ENCODE measurements at regions of chr10 and their contacts with region 1.

Region 1: GRCh38 chr10:124381011-124381611 is 37.6 kb downstream of the OAT start:
- DNase-seq: no peak
- ATAC-seq: no peak
- H3K4me3 ChIP-seq: no peak overlapping the region
- H3K27ac ChIP-seq: no peak overlapping the region
- H3K4me1 ChIP-seq: no peaks in the 10 kb centered on the region
- H3K27me3 ChIP-seq: peaks cover 0 to 37% (median 10%) of the 10 kb centered on the region in 7 donors
- CTCF ChIP-seq: no peak

Region 2: GRCh38 chr10:124005991-124006392 is 375.1 kb before region 1 on chr10:
- intact Hi-C with region 1: loop called in 1 of 10 experiments (anchors 5 kb)
- DNase-seq: no peak
- ATAC-seq: no peak
- H3K4me3 ChIP-seq: no peak overlapping the region
- H3K27ac ChIP-seq: no peak overlapping the region
- H3K4me1 ChIP-seq: peaks cover 0 to 11% (median 0%) of the 10 kb centered on the region in 9 donors
- H3K27me3 ChIP-seq: no peaks in the 10 kb centered on the region
- CTCF ChIP-seq: no peak

Region 3: DNA sequence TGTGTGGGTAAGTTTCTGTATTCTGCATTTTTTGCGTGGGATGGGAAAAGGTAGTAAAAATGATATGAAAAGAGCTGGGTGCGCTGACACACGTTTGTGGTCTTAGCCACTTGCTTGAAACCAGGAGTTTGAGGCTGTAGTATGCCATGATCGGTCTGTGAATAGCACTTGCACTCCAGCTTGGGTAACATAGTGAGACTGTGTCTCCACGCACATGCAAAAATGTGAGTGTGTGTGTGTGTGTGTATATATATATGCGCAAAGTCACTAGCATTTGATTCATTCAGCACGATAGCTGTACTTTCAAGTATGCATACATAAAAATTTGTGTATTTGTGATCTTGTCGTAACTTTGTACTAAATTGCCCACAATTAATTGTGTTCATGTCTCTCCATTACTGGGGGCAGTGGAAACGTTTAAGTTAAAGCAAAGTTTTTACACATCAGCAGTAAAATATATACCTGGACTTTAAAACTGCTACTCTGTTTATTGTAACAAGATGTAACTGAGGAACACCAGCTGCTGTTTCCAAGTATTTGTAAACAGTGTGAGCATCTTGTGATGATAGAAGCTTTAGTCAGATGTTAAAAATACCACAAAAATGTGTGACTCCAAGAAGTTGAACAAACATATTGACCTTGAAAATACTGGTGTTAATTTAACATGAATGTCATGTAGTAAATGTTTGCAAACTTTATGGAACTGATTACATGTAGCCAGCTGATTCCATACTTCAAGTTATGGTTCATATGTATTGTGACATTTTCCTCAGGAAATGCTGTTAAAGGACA is 562.4 kb after region 1 on chr10:
- intact Hi-C with region 1: no loop called
- DNase-seq: no peak
- ATAC-seq: peak in 5 of 8 donors; percentile 35 to 58 (median 49)
- H3K4me3 ChIP-seq: peak overlapping the region in 4 of 10 donors; percentile 0 to 4 (median 3)
- H3K27ac ChIP-seq: peak overlapping the region; percentile 2 to 79 (median 66)
- H3K4me1 ChIP-seq: peaks cover 3 to 97% (median 69%) of the 10 kb centered on the region in 9 donors
- H3K27me3 ChIP-seq: no peaks in the 10 kb centered on the region
- CTCF ChIP-seq: no peak